GM18951 (cell line): ENCODE measurements at regions of chr12 and their contacts with region 1.

Region 1: DNA sequence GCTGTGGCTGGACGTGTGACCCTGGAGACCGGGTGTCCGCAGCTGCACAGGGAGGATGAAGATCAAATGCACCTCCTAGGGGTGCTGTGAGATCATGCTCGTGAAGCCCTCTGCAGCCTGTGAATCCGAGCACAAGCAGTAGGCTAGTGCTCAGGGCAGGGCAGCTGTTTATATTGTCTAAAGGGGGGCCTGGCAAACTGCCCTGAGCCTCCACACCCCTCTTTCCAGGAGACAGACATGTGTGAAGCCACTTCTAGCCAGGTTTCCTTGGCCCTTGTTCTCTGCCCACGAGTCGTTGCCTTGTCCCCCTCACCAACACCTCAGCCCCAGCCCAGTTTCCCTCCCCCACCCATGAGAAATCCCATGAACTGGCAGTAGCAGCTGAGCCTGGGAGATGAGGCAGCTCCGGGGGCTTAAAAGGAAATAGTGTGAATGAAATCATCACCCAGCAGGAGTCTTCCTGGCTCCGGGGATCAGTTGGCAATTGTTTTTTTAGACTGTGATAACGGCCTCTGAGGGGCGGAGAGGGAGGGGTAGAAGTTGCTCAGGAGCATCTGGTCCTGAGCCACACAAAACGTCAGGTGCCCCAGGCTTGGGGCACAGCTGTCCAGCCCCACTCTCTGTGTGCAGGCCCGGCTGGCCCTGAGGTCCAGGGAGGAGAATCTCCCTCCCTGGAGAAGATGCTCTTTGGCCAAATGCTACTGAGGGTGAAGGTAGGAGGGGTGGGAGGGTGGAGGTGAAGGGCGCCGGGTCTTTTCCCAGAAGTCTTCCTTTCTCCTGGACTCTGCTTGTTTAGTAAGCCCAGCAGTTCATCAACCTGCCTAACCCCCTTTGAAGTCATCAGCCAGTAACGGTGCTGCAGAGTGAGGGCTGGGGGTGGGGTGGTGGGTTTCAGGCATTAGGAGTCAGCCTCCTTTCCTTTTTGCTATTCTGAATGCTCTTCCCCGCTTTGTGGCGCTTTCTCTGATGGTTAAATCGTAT is 4.0 kb downstream of the FGF6 start:
- POLR2A ChIP-seq: no peak

Region 2: GRCh38 chr12:4526923-4527546 is 85.4 kb after region 1 on chr12:
- in situ Hi-C with region 1: loop called (anchors 10 kb)
- POLR2A ChIP-seq: no peak

Region 3: DNA sequence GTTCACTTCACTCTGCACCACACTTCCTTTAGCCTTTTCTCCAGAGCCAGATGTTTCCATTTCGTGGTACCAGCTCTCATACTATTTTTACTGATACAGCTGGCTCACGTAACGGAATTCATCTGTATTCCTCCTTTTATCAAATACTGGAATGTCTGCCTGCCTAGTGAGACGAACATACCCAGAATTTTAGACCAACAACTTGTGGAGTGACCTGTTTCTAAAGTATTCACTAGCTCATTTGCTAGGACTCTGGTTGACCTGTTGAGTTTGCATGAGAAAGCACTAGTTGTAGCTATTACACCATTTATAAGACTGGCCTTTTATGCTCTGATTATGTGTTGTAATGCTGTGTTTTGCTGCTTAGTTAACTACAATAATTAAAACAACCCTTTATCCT is 624.6 kb after region 1 on chr12:
- in situ Hi-C with region 1: no loop called
- POLR2A ChIP-seq: no peak